GM18951 (cell line): ENCODE measurements at regions of chr5 and their contacts with region 1.

Region 1: GRCh38 chr5:126531543-126532120 is 63.4 kb downstream of the ALDH7A1 start:
- POLR2A ChIP-seq: no peak

Region 2: GRCh38 chr5:126354012-126354857 is 177.4 kb before region 1 on chr5:
- in situ Hi-C with region 1: loop called (anchors 10 kb)
- POLR2A ChIP-seq: no peak

Region 3: GRCh38 chr5:126490167-126490940 is 41.3 kb before region 1 on chr5:
- in situ Hi-C with region 1: no loop called
- POLR2A ChIP-seq: no peak